CD4-positive, alpha-beta memory T cell (primary cell): ENCODE measurements at regions of chr17 and their contacts with region 1.

Region 1: DNA sequence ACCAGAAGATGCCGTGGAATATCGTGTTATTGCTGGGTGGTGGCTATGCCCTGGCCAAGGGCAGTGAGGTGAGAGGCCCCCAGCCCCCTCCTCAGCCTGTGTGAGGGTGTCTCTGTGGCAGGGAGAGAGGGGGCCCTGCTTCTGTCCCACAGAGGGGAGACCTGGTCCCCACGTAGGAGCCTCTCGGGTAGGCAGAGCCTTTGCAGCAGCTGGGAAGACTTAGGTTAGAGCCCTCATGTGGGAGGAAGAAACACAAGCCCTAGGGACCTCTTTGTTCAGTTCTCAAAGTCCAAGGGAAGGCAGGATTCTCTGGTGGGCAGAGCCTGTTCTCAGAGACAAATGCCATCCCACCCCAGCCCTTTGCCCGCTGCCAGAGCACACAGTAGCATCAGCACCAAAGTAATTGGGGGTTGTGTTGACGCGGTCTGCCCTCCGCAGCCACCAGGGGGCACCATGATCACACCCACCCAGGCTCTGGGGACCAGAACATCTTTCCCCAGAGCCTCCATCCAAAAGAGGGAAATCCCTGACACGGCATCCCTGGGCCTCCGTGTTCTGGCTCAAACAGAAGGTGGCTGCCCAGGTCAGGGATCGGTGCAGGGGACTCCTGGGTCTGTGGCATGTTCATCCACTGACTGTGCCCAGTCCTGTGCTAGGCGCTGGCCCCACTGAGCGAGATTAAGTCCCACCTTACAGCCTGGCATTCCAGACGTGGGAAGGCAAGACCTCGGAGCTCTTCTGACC is 11.5 kb upstream of the FOXN1 start:
- DNase-seq: peak; percentile 68 to 74 (median 71)
- H3K4me3 ChIP-seq: no peak overlapping the region
- H3K4me3 Mint-ChIP-seq: no peak overlapping the region
- H3K27ac ChIP-seq: no peak overlapping the region
- H3K27ac Mint-ChIP-seq: peak overlapping the region in 1 of 7 donors; percentile 46
- H3K4me1 ChIP-seq: no peaks in the 10 kb centered on the region
- H3K4me1 Mint-ChIP-seq: no peaks in the 10 kb centered on the region
- H3K27me3 ChIP-seq: no peaks in the 10 kb centered on the region
- H3K27me3 Mint-ChIP-seq: peaks cover 0 to 6% of the 10 kb centered on the region in 2 donors

Region 2: DNA sequence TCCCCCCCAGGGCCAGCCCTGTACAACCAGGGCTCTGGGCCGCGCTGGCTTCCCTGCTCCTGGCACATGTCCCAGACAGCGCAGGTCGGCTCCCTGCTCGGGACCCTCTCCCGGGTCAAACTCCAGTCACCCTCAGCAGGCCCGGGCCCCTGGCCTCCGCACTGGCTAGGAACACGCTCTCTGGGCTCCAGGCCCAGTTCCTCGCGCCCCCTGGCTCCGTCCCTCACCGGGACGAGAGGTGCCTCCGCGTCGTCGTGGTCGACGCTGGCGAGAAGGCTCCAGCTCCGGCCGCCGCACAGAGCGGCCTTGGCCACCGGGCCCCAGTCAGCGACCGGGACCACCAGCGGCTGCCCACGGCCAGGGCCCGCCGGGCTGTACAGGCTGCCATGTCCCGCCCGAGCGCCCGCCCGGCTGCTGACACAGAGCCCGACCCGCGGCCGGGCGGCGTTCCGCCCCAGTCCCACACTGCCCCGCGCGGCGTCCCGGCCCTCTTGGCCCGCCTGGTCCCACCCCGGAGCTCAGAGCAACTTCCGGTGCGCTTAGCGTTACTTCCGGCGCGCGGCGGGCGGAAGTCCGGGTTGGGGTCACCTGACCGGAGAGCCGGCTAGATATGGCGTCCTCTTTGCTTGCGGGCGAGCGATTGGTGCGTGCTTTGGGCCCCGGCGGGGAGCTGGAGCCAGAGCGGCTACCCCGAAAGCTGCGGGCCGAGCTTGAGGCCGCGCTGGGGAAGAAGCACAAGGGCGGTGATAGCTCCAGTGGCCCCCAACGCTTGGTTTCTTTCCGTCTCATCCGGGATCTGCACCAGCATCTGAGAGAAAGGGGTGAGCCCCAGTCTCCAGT is 137.3 kb before region 1 on chr17 and contains the start of gene POLDIP2:
- CTCF ChIA-PET with region 1: no interaction called
- POLR2A ChIA-PET with region 1: no interaction called
- intact Hi-C with region 1: no loop called
- DNase-seq: peak; percentile 95 to 96 (median 96)
- H3K4me3 ChIP-seq: peak within 1 kb of the TSS; percentile 67 to 90
- H3K4me3 Mint-ChIP-seq: peak within 1 kb of the TSS; percentile 92 to 98 (median 95)
- H3K27ac ChIP-seq: peak within 1 kb of the TSS; percentile 85
- H3K27ac Mint-ChIP-seq: peak within 1 kb of the TSS; percentile 93 to 97 (median 96)
- H3K4me1 ChIP-seq: peaks cover 24% of the 10 kb centered on the region
- H3K4me1 Mint-ChIP-seq: peaks cover 18 to 36% (median 26%) of the 10 kb centered on the region in 4 donors
- H3K27me3 ChIP-seq: no peaks in the 10 kb centered on the region
- H3K27me3 Mint-ChIP-seq: no peaks in the 10 kb centered on the region
- total RNA-seq, gene POLDIP2: 27.8 to 28.7 TPM

Region 3: DNA sequence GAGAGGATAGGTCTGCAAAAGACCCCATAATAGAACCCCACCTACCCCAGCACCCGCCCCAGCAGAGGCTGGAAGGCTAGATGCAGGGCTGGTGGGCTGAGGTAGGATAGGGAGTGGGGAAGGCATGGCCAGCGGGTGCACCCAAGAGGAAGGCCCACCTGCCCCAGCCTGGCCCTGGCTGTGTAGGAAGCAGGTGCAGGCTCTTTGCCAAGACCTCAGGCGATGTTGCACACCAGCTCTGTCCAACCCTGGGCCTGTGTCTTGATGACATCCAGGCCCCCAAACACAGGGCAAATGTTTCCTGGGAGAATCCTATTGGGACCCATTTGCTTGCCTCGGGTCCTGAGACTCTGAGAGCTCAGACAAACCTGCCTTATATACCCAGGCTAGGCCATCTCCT is 45.6 kb after region 1 on chr17:
- CTCF ChIA-PET with region 1: interaction called, 3 read pairs
- POLR2A ChIA-PET with region 1: no interaction called
- intact Hi-C with region 1: loop called (anchors 2 kb)
- DNase-seq: no peak
- H3K4me3 ChIP-seq: no peak overlapping the region
- H3K4me3 Mint-ChIP-seq: no peak overlapping the region
- H3K27ac ChIP-seq: no peak overlapping the region
- H3K27ac Mint-ChIP-seq: peak overlapping the region in 3 of 7 donors; percentile 52 to 70 (median 60)
- H3K4me1 ChIP-seq: no peaks in the 10 kb centered on the region
- H3K4me1 Mint-ChIP-seq: peaks cover 0 to 2% (median 0%) of the 10 kb centered on the region in 4 donors
- H3K27me3 ChIP-seq: no peaks in the 10 kb centered on the region
- H3K27me3 Mint-ChIP-seq: no peaks in the 10 kb centered on the region

Region 4: DNA sequence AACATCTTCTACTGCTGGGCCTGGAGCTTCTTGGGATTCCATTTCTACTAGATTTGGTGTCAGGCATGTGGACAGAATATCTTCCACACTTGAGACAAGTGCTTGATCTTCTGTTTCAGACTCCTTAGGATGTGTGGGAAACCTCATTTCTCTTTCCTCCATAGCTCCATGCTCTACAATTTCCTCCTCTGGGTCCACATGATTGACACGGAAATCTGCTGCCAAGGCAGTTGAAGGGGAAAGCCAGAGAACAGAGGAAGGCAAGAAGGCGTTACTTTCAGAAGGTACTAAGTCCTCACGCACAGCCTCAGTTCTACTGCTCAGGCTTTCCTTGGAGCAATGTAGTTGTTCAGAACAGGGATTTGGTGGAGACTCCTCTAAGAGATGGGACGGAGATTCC is 97.6 kb after region 1 on chr17:
- CTCF ChIA-PET with region 1: no interaction called
- POLR2A ChIA-PET with region 1: no interaction called
- intact Hi-C with region 1: no loop called
- DNase-seq: no peak
- H3K4me3 ChIP-seq: no peak overlapping the region
- H3K4me3 Mint-ChIP-seq: no peak overlapping the region
- H3K27ac ChIP-seq: no peak overlapping the region
- H3K27ac Mint-ChIP-seq: no peak overlapping the region
- H3K4me1 ChIP-seq: no peaks in the 10 kb centered on the region
- H3K4me1 Mint-ChIP-seq: peaks cover under 1 to 1% (median under 1%) of the 10 kb centered on the region in 4 donors
- H3K27me3 ChIP-seq: no peaks in the 10 kb centered on the region
- H3K27me3 Mint-ChIP-seq: no peaks in the 10 kb centered on the region

Region 5: GRCh38 chr17:28612936-28613872 is 118.6 kb after region 1 on chr17:
- CTCF ChIA-PET with region 1: interaction called, 51 read pairs
- POLR2A ChIA-PET with region 1: interaction called, 4 read pairs
- intact Hi-C with region 1: no loop called
- DNase-seq: peak in 4 of 5 donors; percentile 19 to 40 (median 40)
- H3K4me3 ChIP-seq: no peak overlapping the region
- H3K4me3 Mint-ChIP-seq: no peak overlapping the region
- H3K27ac ChIP-seq: no peak overlapping the region
- H3K27ac Mint-ChIP-seq: peak overlapping the region in 6 of 7 donors; percentile 24 to 65 (median 36)
- H3K4me1 ChIP-seq: no peaks in the 10 kb centered on the region
- H3K4me1 Mint-ChIP-seq: peaks cover 4 to 13% (median 10%) of the 10 kb centered on the region in 4 donors
- H3K27me3 ChIP-seq: no peaks in the 10 kb centered on the region
- H3K27me3 Mint-ChIP-seq: no peaks in the 10 kb centered on the region